Dendritic cell treated with granulocyte-macrophage colony-stimulating factor and Interleukin-4, amounts not matched to agents 40 ng/mL and 50 ng/mL, for 4 days (primary cell): ENCODE measurements at regions of chr2 and their contacts with region 1.

Region 1: DNA sequence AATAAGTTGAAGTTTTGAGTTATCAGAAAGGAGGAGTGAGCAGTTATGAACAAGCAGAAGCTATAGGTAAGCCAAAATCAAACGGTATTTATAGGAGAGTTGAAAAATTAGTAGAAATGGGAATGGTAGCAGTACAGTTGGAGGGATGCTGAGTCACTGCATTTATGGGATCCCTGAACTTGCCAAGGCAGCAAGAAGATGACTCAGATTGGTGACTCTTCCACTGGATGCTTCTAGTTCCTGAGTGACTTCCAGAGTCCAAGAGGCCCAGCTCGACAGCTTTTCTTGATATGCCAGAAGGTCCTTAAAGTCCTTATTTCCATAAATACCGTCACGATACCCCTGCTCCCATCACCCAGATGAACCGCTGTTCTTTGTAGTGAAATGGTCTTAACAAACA is 31.1 kb upstream of the ACTR3 start:
- H3K4me3 Mint-ChIP-seq: no peak overlapping the region
- H3K27ac Mint-ChIP-seq: peak overlapping the region; percentile 84
- H3K4me1 Mint-ChIP-seq: peaks cover 75% of the 10 kb centered on the region
- H3K27me3 Mint-ChIP-seq: no peaks in the 10 kb centered on the region

Region 2: DNA sequence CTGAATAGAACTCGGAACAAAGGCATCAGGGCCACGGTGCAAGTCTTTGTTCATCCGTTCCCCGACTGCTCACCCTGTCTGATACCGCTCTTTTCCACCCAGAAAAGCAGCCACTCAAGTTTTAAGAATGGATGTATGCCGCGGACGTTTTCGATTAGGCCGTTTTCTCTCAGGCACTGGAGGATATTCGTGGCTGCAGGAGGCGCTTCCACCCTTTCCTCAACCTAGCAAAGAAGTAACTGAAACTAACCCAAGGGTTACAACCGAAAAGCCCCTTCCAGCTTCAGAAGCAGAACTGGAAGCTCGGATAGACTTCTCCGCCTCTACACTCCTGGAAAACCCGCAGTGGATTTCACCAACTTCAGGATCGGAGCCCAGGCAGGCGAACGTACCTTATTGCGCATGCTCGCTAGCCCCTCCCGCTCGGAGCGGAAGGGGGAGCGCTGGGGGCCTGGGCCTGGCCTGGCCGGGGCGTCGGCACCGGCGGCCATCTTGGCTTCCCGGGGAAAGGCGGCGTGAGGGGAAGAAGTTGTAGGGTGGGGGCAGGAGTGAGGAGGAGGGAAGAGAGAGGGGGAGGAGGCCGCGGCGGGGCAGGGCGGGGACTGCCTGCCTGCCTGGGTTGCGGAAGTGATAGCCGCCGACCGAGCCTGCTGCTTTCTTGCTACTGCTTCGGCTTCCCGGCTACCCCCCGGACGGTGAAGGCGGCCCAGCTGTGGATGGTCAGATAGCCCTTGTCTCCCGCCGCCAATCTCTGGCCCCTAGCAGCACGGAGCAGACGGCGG is 30.9 kb after region 1 on chr2 and contains the start of gene ACTR3:
- intact Hi-C with region 1: loop called (anchors 1 kb)
- H3K4me3 Mint-ChIP-seq: peak within 1 kb of the TSS; percentile 96
- H3K27ac Mint-ChIP-seq: peak within 1 kb of the TSS; percentile 98
- H3K4me1 Mint-ChIP-seq: peaks cover 70% of the 10 kb centered on the region
- H3K27me3 Mint-ChIP-seq: no peaks in the 10 kb centered on the region